AG04450 (cell line): ENCODE measurements at regions of chr3 and their contacts with region 1.

Region 1: DNA sequence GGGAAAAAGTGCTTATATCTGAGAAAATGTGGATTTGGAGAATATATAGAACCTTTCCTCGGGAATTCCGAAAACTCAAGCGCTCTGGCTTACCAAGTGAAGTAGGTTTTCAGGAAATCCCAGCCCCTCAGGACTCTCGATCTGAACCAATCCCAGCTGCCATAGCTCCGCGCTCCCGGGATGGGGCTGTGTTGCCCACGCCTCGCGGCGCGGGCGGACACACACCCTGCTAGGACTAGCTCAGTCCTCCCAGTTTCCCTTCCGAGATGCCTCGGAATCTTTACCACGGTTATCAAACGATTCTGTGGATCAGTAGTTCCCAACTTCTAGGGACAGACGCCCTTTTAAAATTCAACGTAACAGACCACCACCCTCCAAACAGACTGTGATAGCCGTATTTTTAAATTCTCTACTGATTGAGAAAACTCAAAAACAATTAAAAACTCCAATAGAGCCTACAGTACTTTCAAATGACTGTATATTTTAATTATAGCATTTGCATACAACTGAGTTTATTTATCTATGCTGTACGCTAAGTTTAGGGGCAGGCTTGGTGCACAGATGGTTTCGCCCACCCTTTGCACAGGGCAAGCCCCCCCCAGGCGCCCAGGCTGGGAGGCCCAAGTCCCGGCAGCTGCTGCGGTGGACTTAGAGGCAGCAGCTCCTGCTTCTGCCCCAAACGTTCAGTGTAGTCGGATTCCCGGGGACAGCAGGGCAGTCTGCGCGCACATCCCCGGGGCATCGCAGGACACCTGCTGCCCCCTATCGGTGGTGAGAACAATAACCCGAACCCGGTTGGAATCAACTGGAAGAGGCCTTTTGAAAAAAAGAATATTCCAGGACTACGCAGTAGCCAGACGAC is 52.3 kb downstream of the CCDC54 start:
- DNase-seq: peak; percentile 70
- H3K4me3 ChIP-seq: peak overlapping the region; percentile 61
- H3K27ac ChIP-seq: no peak overlapping the region
- H3K27me3 ChIP-seq: no peaks in the 10 kb centered on the region
- CTCF ChIP-seq: peak; percentile 91

Region 2: DNA sequence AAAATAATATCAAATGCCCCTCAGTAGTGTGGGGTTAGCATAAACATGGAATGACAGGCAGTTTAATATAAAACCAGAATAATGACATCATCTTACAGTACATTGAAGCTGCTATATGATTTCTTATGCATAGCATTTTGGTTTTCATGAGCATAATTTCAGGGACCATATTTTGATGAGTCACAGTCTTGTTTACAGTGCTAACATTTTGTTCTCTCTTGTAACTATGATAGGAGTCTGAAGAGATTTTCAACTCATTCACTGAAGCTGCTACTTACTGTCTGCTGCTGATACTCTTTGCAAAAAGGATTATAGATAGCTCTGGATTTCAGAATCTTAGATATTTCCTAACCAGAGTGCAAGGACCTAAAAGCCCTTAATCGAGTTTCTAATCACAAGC is 144.9 kb before region 1 on chr3:
- CTCF ChIA-PET with region 1: interaction called, 22 read pairs
- POLR2A ChIA-PET with region 1: no interaction called
- DNase-seq: no peak
- H3K4me3 ChIP-seq: no peak overlapping the region
- H3K27ac ChIP-seq: no peak overlapping the region
- H3K27me3 ChIP-seq: no peaks in the 10 kb centered on the region
- CTCF ChIP-seq: no peak

Region 3: DNA sequence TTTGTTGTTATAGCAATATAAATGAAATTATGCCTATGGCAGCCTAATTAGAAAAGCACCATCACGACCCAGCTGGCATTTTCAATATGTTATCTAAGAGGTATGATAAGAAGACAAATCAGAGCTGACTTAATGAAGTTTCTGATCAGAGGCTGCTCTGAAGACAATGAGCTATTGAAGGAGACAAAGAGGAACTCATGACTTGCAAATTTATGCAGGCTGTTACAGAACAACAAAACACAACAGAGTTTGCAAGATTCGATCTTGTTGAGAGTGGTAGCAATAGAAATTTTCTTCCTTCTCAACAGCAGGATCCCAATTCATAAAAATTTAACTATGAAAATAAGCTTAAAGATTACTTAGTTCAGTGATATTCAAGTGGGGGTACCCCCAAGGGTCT is 44.6 kb before region 1 on chr3:
- CTCF ChIA-PET with region 1: interaction called, 19 read pairs
- POLR2A ChIA-PET with region 1: no interaction called
- DNase-seq: no peak
- H3K4me3 ChIP-seq: no peak overlapping the region
- H3K27ac ChIP-seq: no peak overlapping the region
- H3K27me3 ChIP-seq: no peaks in the 10 kb centered on the region
- CTCF ChIP-seq: no peak

Region 4: DNA sequence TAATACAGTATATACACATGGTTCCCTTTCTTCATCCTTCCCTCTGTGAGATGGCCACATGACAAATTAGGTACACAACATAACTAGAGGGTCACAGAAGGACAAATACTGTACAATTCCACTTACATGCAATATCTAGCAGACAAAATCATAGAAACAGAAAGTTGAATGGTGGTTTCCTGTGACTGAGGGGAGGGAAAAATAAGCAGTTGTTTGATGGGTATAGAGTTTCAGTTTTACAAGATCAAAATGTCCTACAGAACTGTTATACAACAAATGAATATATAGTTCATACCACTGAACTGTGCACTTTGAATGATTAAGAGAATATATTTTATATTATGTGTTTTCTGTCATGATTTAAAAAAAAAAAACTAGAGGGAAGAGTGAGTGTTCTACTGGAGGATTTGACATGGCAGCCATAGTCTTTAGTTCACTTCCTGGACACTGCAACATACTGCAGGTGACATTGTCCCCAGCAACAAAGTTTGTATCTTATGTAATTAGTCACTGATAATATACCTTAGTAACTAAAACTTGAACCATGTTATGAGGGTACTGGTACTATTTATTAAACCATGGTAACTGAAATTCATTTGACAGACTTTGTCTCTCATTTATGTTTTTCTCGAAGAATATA is 15.1 kb before region 1 on chr3:
- CTCF ChIA-PET with region 1: interaction called, 95 read pairs
- POLR2A ChIA-PET with region 1: interaction called, 3 read pairs
- DNase-seq: no peak
- H3K4me3 ChIP-seq: no peak overlapping the region
- H3K27ac ChIP-seq: no peak overlapping the region
- H3K27me3 ChIP-seq: no peaks in the 10 kb centered on the region
- CTCF ChIP-seq: no peak

Region 5: GRCh38 chr3:107452436-107452835 is 22.9 kb after region 1 on chr3:
- CTCF ChIA-PET with region 1: interaction called, 27 read pairs
- POLR2A ChIA-PET with region 1: no interaction called
- DNase-seq: no peak
- H3K4me3 ChIP-seq: no peak overlapping the region
- H3K27ac ChIP-seq: no peak overlapping the region
- H3K27me3 ChIP-seq: no peaks in the 10 kb centered on the region
- CTCF ChIP-seq: no peak

Region 6: DNA sequence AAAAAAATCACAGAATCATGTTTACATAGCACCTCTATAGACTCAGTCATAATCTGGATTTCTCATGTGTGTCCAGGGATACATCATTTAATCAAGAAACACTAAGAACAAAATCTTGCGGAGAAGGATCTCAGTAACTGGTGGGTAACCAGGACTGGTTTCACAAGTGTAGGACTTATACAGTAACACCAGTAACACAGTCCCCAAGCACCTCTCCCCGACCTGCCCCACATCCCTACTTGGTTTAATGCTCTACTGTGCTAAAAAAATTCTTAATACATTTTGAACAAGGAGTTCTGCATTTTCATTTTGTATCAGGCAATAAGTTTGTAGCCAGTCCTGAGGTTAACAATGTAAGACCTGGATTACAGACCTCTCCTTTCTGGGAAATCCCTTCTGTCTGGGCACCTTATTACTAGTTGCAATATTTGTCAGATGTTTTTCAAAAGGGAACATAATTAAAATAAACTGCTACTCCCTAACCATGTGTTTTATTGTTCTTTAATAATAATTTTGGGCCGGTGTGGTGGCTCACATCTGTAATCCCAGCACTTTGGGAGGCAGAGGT is 35.6 kb after region 1 on chr3:
- CTCF ChIA-PET with region 1: interaction called, 12 read pairs
- POLR2A ChIA-PET with region 1: no interaction called
- DNase-seq: no peak
- H3K4me3 ChIP-seq: no peak overlapping the region
- H3K27ac ChIP-seq: no peak overlapping the region
- H3K27me3 ChIP-seq: no peaks in the 10 kb centered on the region
- CTCF ChIP-seq: no peak

Region 7: DNA sequence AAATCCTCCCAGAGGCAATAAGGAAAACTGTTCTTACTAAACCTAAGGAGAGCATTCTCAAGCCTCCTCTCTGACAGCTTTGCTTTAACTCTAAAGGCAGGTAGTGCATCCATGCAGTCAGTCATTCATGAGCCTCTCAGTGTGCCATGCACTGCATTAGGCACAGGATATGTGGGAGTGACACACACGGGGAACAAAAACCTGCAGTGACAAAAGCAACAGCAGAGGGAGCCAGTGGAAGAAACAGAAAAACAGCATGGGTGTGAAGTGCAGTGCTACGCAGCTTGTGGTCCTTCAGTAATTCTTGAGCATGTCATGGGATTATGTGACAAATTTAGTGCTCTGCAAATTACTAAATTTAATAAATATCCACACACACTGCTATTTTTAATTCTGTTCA is 323.9 kb after region 1 on chr3:
- CTCF ChIA-PET with region 1: no interaction called
- POLR2A ChIA-PET with region 1: no interaction called
- DNase-seq: no peak
- H3K4me3 ChIP-seq: no peak overlapping the region
- H3K27ac ChIP-seq: no peak overlapping the region
- H3K27me3 ChIP-seq: no peaks in the 10 kb centered on the region
- CTCF ChIP-seq: peak; percentile 55